HepG2 (cell line): ENCODE measurements at regions of chr4 and their contacts with region 1.

Region 1: GRCh38 chr4:68175562-68176155 is 46.0 kb upstream of the TMPRSS11F start:
- DNase-seq: peak; percentile 44
- ATAC-seq: peak; percentile 68
- H3K4me3 ChIP-seq: no peak overlapping the region
- H3K27ac ChIP-seq: no peak overlapping the region
- H3K4me1 ChIP-seq: no peaks in the 10 kb centered on the region
- H3K27me3 ChIP-seq: no peaks in the 10 kb centered on the region
- CTCF ChIP-seq: peak; percentile 66
- EP300 ChIP-seq: no peak
- POLR2A ChIP-seq: no peak
- RAD21 ChIP-seq: peak; percentile 47; the same call in 1 of the 2 replicates

Region 2: DNA sequence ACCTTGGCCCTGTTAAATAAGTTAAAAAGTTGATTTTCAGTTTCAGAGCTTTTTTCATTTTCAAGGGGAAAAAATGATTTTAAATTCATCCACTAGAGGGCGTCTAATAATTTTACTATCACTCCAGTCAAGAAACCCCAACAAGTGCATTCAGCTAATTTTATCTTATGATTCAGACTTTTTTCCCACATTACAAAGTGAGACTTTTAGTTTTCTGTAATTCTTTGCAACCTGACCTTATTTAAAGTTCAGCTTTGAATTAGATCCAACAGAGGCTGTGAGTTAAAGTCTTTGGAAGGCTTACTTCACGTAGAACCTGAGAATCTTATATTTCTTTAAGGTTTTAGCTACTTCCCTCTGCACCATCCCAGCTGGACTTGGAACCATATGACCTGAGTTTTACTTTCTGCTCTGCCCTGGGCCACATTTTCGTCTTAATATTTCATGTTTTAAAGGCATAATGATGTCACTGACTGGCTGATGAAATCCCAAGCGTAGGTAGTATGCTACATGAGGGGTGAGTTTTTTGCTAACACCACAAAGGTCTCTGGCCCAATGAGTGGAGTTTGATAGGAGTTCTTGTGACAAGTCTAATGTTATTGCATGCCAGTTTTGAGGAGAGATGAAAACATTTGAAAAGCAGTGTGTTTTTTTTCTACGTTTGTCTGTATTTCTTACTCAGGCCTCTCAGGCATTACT is 428.7 kb before region 1 on chr4:
- CTCF ChIA-PET with region 1: no interaction called
- POLR2A ChIA-PET with region 1: no interaction called
- in situ Hi-C with region 1: no loop called
- intact Hi-C with region 1: loop called (anchors 1 kb)
- DNase-seq: peak; percentile 7
- ATAC-seq: no peak
- H3K4me3 ChIP-seq: no peak overlapping the region
- H3K27ac ChIP-seq: no peak overlapping the region
- H3K4me1 ChIP-seq: no peaks in the 10 kb centered on the region
- H3K27me3 ChIP-seq: no peaks in the 10 kb centered on the region
- CTCF ChIP-seq: peak; percentile 33
- EP300 ChIP-seq: no peak
- POLR2A ChIP-seq: no peak
- RAD21 ChIP-seq: no peak

Region 3: GRCh38 chr4:67871867-67872266 is 303.8 kb before region 1 on chr4:
- CTCF ChIA-PET with region 1: interaction called, 5 read pairs
- POLR2A ChIA-PET with region 1: no interaction called
- in situ Hi-C with region 1: no loop called
- intact Hi-C with region 1: loop called (anchors 1 kb)
- DNase-seq: peak; percentile 24
- ATAC-seq: peak; percentile 95
- H3K4me3 ChIP-seq: no peak overlapping the region
- H3K27ac ChIP-seq: no peak overlapping the region
- H3K4me1 ChIP-seq: no peaks in the 10 kb centered on the region
- H3K27me3 ChIP-seq: no peaks in the 10 kb centered on the region
- CTCF ChIP-seq: peak; percentile 52
- EP300 ChIP-seq: no peak
- POLR2A ChIP-seq: no peak
- RAD21 ChIP-seq: no peak

Region 4: DNA sequence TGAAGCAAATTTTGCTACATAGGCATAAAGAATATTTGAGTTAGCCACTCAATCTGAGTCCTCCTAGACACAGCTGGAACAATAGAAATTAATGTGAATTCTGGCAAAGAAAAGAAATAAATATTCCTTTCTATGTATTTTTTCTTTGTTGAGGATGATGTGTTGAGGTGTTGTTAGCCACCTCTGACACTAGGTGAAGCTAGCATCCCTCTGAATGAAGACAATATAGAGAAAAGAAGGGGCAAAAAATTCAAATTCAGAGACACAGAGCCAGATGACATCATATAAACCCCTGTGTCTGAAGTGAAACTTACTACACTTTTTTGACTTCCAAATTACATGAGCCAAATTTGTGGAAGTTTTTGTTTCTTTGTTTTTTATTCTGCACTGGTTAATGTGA is 257.2 kb before region 1 on chr4:
- CTCF ChIA-PET with region 1: no interaction called
- POLR2A ChIA-PET with region 1: no interaction called
- in situ Hi-C with region 1: no loop called
- intact Hi-C with region 1: loop called (anchors 2 kb)
- DNase-seq: no peak
- ATAC-seq: no peak; the same call in 1 of the 3 replicates
- H3K4me3 ChIP-seq: no peak overlapping the region
- H3K27ac ChIP-seq: no peak overlapping the region
- H3K4me1 ChIP-seq: no peaks in the 10 kb centered on the region
- H3K27me3 ChIP-seq: no peaks in the 10 kb centered on the region
- CTCF ChIP-seq: peak; percentile 29; the same call in 1 of the 2 replicates
- EP300 ChIP-seq: no peak
- POLR2A ChIP-seq: no peak
- RAD21 ChIP-seq: no peak

Region 5: GRCh38 chr4:67983333-67983732 is 192.3 kb before region 1 on chr4:
- CTCF ChIA-PET with region 1: interaction called, 18 read pairs
- POLR2A ChIA-PET with region 1: no interaction called
- in situ Hi-C with region 1: loop called (anchors 10 kb)
- intact Hi-C with region 1: loop called (anchors 1 kb)
- DNase-seq: no peak
- ATAC-seq: no peak
- H3K4me3 ChIP-seq: no peak overlapping the region
- H3K27ac ChIP-seq: no peak overlapping the region
- H3K4me1 ChIP-seq: no peaks in the 10 kb centered on the region
- H3K27me3 ChIP-seq: no peaks in the 10 kb centered on the region
- CTCF ChIP-seq: no peak
- EP300 ChIP-seq: no peak
- POLR2A ChIP-seq: no peak
- RAD21 ChIP-seq: no peak

Region 6: GRCh38 chr4:67988991-67989390 is 186.7 kb before region 1 on chr4:
- CTCF ChIA-PET with region 1: interaction called, 18 read pairs
- POLR2A ChIA-PET with region 1: no interaction called
- in situ Hi-C with region 1: loop called (anchors 10 kb)
- intact Hi-C with region 1: loop called (anchors 1 kb)
- DNase-seq: no peak
- ATAC-seq: no peak
- H3K4me3 ChIP-seq: no peak overlapping the region
- H3K27ac ChIP-seq: no peak overlapping the region
- H3K4me1 ChIP-seq: no peaks in the 10 kb centered on the region
- H3K27me3 ChIP-seq: no peaks in the 10 kb centered on the region
- CTCF ChIP-seq: no peak
- EP300 ChIP-seq: no peak
- POLR2A ChIP-seq: no peak
- RAD21 ChIP-seq: no peak

Region 7: GRCh38 chr4:68002906-68003305 is 172.8 kb before region 1 on chr4:
- CTCF ChIA-PET with region 1: no interaction called
- POLR2A ChIA-PET with region 1: no interaction called
- in situ Hi-C with region 1: no loop called
- intact Hi-C with region 1: no loop called
- DNase-seq: no peak
- ATAC-seq: no peak
- H3K4me3 ChIP-seq: no peak overlapping the region
- H3K27ac ChIP-seq: no peak overlapping the region
- H3K4me1 ChIP-seq: no peaks in the 10 kb centered on the region
- H3K27me3 ChIP-seq: no peaks in the 10 kb centered on the region
- CTCF ChIP-seq: no peak
- EP300 ChIP-seq: no peak
- POLR2A ChIP-seq: no peak
- RAD21 ChIP-seq: no peak

Region 8: GRCh38 chr4:68299492-68300457 is 124.1 kb after region 1 on chr4:
- CTCF ChIA-PET with region 1: no interaction called
- POLR2A ChIA-PET with region 1: no interaction called
- in situ Hi-C with region 1: no loop called
- intact Hi-C with region 1: no loop called
- DNase-seq: peak; percentile 53
- ATAC-seq: peak; percentile 86
- H3K4me3 ChIP-seq: no peak overlapping the region; a peak in 1 of 6 replicates
- H3K27ac ChIP-seq: no peak overlapping the region
- H3K4me1 ChIP-seq: peaks cover 27% of the 10 kb centered on the region
- H3K27me3 ChIP-seq: no peaks in the 10 kb centered on the region
- CTCF ChIP-seq: no peak
- EP300 ChIP-seq: peak in 1 of 2 experiments; percentile 68; a peak in 1 of 4 replicates
- POLR2A ChIP-seq: no peak
- RAD21 ChIP-seq: no peak